Heart right ventricle (tissue), 16 donors: ENCODE measurements at regions of chr5 and their contacts with region 1.

Region 1: GRCh38 chr5:143824851-143825720 is 13.1 kb downstream of the HMHB1 start:
- DNase-seq: peak; percentile 76 to 88
- ATAC-seq: peak; percentile 94 to 98 (median 96)
- H3K4me3 ChIP-seq: no peak overlapping the region
- H3K27ac ChIP-seq: no peak overlapping the region
- H3K4me1 ChIP-seq: peaks cover 0 to 13% (median 6%) of the 10 kb centered on the region in 9 donors
- H3K27me3 ChIP-seq: no peaks in the 10 kb centered on the region
- CTCF ChIP-seq: peak; percentile 92 to 99 (median 96)

Region 2: DNA sequence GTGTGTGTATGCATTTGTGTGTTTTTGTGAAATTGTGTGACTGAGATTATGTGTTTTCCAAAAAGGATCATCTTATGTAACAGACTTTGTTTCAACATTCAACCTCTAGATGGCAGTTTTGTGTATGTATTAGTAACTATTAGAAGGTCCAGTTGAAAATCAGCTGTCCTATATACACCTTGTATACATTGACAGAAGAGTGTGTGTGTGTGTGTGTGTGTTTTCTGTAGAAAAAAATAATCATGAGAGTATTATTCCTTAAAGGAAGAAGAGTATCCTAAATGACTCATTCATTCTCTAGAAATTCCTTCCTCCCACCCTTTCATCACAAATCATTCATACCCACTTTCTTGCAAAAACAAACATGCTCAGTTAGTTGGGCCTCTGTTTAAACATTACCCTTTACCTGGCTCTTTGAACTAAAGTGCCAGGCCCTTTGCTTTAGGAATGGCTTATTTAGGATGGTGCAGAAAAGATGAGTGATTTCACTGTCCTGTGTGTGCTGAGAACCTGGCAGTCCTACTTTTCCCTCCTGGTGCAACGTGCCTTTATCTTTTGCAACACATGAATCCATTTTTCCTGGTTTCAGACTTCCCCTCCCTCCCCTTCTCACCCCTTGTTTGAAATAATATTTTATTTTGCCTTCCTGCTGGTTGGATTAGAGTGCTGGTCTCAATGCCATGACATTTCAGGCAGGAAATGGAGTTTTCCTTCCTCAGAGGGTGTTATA is 902.7 kb before region 1 on chr5:
- intact Hi-C with region 1: loop called in 8 of 10 experiments (anchors 2 to 10 kb)
- DNase-seq: no peak
- ATAC-seq: peak in 6 of 8 donors; percentile 41 to 71 (median 58)
- H3K4me3 ChIP-seq: no peak overlapping the region
- H3K27ac ChIP-seq: peak overlapping the region in 9 of 10 donors; percentile 11 to 86 (median 44)
- H3K4me1 ChIP-seq: peaks cover 7 to 66% (median 43%) of the 10 kb centered on the region in 9 donors
- H3K27me3 ChIP-seq: no peaks in the 10 kb centered on the region
- CTCF ChIP-seq: peak in 7 of 9 donors; percentile 44 to 75 (median 60)

Region 3: GRCh38 chr5:143016777-143017516 is 808.1 kb before region 1 on chr5:
- intact Hi-C with region 1: loop called in 1 of 10 experiments (anchors 10 kb)
- DNase-seq: peak in 1 of 2 donors; percentile 32
- ATAC-seq: peak in 2 of 8 donors; percentile 46 to 48
- H3K4me3 ChIP-seq: no peak overlapping the region
- H3K27ac ChIP-seq: no peak overlapping the region
- H3K4me1 ChIP-seq: peaks cover 0 to 25% (median 9%) of the 10 kb centered on the region in 9 donors
- H3K27me3 ChIP-seq: no peaks in the 10 kb centered on the region
- CTCF ChIP-seq: peak in 8 of 9 donors; percentile 21 to 59 (median 42)

Region 4: DNA sequence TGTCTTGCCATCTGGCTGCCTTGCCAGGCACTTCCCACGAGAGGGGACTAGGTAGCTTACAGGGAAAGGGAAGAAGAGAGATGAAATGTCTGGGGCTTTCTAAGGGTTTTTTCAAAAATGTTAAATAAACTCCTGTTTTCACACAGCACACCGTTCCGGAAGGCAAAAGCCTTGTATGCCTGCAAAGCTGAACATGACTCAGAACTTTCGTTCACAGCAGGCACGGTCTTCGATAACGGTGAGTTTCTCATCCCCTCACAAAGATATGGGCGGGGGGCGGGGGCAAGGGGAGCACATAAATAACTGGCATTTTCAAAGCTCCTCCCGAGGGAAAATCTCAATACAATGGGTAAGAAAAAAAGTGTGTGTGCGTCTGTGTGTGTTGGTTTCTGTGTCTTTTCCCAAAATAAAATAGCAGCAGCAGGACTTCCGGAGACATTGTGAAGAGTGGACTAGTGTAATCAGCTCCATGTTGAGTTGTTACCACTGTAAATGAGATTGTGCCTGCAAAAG is 611.2 kb before region 1 on chr5:
- intact Hi-C with region 1: loop called in 1 of 10 experiments (anchors 10 kb)
- DNase-seq: no peak
- ATAC-seq: peak in 7 of 8 donors; percentile 21 to 77 (median 49)
- H3K4me3 ChIP-seq: no peak overlapping the region
- H3K27ac ChIP-seq: peak overlapping the region in 9 of 10 donors; percentile 9 to 79 (median 66)
- H3K4me1 ChIP-seq: peaks cover 0 to 61% (median 45%) of the 10 kb centered on the region in 9 donors
- H3K27me3 ChIP-seq: no peaks in the 10 kb centered on the region
- CTCF ChIP-seq: no peak

Region 5: GRCh38 chr5:143693651-143694252 is 131.3 kb before region 1 on chr5:
- intact Hi-C with region 1: loop called in 1 of 10 experiments (anchors 10 kb)
- DNase-seq: no peak
- ATAC-seq: peak in 5 of 8 donors; percentile 28 to 68 (median 42)
- H3K4me3 ChIP-seq: no peak overlapping the region
- H3K27ac ChIP-seq: peak overlapping the region in 4 of 10 donors; percentile 20 to 75 (median 30)
- H3K4me1 ChIP-seq: peaks cover 0 to 46% (median 22%) of the 10 kb centered on the region in 9 donors
- H3K27me3 ChIP-seq: no peaks in the 10 kb centered on the region
- CTCF ChIP-seq: no peak

Region 6: GRCh38 chr5:144142139-144142823 is 317.2 kb after region 1 on chr5:
- intact Hi-C with region 1: loop called in 3 of 10 experiments (anchors 5 to 10 kb)
- DNase-seq: no peak
- ATAC-seq: peak; percentile 22 to 71 (median 64)
- H3K4me3 ChIP-seq: no peak overlapping the region
- H3K27ac ChIP-seq: peak overlapping the region in 1 of 10 donors; percentile 12
- H3K4me1 ChIP-seq: peaks cover 2 to 43% (median 21%) of the 10 kb centered on the region in 9 donors
- H3K27me3 ChIP-seq: no peaks in the 10 kb centered on the region
- CTCF ChIP-seq: peak; percentile 28 to 77 (median 65)